Calu3 (cell line): ENCODE measurements at regions of chr15 and their contacts with region 1.

Region 1: GRCh38 chr15:67109141-67110034 is 44.0 kb downstream of the SMAD3 start:
- DNase-seq: no peak
- H3K4me3 Mint-ChIP-seq: no peak overlapping the region
- H3K27ac Mint-ChIP-seq: peak overlapping the region; percentile 93
- H3K4me1 Mint-ChIP-seq: no peaks in the 10 kb centered on the region
- H3K27me3 Mint-ChIP-seq: no peaks in the 10 kb centered on the region
- CTCF ChIP-seq: no peak

Region 2: GRCh38 chr15:67091071-67091979 is 18.1 kb before region 1 on chr15:
- CTCF ChIA-PET with region 1: interaction called, 4 read pairs
- intact Hi-C with region 1: loop called (anchors 2 kb)
- DNase-seq: peak; percentile 90
- H3K4me3 Mint-ChIP-seq: peak overlapping the region; percentile 41
- H3K27ac Mint-ChIP-seq: peak overlapping the region; percentile 82
- H3K4me1 Mint-ChIP-seq: peaks cover 77% of the 10 kb centered on the region
- H3K27me3 Mint-ChIP-seq: no peaks in the 10 kb centered on the region
- CTCF ChIP-seq: no peak

Region 3: GRCh38 chr15:67150028-67150860 is 40.9 kb after region 1 on chr15:
- CTCF ChIA-PET with region 1: interaction called, 7 read pairs
- intact Hi-C with region 1: loop called (anchors 1 kb)
- DNase-seq: peak; percentile 92
- H3K4me3 Mint-ChIP-seq: peak overlapping the region; percentile 44
- H3K27ac Mint-ChIP-seq: peak overlapping the region; percentile 79
- H3K4me1 Mint-ChIP-seq: peaks cover 67% of the 10 kb centered on the region
- H3K27me3 Mint-ChIP-seq: no peaks in the 10 kb centered on the region
- CTCF ChIP-seq: no peak